Posterior vena cava (tissue), 2 donors: ENCODE measurements at regions of chr20 and their contacts with region 1.

Region 1: DNA sequence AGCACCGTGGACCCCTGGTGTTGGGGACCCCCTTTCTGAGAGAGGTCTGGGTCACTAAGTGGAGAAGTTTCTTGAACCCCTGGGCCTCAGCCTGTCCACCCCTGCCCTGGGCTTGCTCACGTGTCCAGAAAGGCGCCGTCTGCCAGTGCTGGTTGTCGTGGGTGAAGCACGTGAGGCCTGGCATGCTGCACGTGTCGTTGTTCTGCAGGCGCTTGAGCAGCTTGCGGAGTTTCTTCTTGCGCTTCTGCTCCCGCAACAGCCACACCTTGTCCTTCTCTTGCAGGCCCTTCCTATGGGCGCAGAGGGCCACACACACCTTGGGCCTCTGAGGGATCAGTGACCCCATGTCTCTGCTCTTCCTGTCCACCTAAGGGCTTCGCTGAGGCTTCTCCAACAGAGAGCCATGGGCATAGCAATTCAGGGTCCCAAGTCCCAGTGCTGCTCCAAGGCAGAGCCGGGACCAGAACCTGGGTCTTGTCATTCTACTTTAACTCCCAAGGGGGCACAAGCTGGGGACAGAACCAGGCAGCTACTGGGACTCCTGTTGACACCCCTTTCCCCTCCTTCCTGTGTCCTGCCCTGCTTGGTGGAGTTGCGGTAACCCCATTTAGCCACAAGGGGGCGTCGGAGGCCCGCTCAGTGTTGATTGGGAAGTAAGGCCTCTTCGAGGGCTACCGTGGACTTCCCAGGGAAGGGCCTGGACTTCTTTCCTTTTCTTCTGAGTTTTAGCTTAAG is 121.8 kb downstream of the SULF2 start:
- DNase-seq: peak; percentile 94

Region 2: GRCh38 chr20:47521059-47521808 is 142.3 kb before region 1 on chr20:
- intact Hi-C with region 1: no loop called
- DNase-seq: no peak

Region 3: GRCh38 chr20:47701612-47702011 is 38.1 kb after region 1 on chr20:
- intact Hi-C with region 1: no loop called
- DNase-seq: no peak

Region 4: DNA sequence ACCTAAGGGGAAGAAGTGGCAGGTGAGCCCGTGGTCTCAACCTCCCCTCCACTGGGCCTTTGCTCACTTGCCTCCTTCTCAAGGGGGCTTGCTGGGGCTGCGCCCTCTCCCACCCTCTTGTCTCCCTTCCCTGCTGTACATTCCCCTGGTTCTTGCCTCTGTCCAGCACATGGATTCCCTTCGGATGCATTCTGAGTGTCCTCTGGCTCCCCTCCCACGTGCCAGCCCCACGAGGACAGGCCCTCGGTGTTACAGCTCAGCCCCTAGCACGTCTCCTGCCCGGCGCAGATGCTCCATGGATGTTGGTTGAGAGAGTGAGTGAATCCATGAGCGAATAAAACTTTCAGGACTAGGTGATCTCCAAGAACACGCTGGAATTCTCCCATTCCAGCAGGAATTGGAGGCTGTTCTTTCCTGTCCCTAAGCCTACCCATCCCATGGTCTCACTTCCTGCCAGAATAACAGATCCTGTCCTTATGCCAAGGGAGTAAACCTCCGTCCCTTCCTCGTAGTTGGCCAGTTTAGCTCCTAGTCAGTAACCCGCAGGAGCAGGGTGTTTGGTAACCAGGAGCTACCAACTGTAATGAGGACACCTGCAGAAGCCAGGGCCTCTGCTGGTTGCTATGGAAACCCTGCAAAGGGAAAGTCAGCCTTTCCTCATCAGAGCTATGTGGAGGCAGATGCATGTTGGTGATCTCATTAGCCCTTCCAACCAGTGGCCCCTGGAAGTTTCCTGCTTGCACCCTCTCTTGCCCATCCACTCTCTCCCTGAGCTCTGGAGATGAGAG is 489.8 kb after region 1 on chr20:
- intact Hi-C with region 1: no loop called
- DNase-seq: peak; percentile 31

Region 5: DNA sequence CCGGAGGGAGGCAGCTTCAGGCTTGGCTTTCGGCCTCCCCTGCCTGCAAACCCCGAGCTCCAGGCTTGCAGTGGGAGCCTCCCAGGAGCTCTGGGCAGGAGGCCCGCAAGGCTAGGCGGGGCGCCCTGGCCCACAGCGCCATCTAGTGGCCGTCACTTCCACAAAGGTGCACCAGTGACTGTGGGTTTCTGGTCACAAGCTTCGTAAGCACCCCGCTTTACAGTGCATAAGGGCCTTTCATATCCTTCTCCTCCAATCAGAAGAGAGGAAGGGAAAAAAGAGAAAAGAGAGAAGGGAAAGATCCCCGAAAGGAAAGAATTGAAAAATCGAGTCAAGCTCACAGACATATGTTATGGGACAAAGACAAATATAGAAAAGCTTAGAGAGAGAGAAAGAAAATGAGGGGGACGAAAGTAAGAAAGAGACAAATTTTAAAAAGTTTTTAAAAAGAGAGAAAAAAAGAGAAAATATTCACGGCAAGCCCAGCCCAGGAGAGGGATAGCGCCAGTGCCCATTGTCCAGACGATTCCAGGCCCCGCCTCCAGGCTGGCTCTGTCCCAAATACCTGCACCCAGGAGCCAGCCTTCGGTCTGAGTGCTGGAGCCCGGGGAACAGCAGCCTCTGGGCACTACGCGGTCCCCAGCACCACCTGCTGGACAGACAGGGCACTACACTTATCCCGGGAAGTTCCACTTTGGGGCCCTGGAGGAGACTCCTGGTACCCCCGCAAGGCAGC is 957.2 kb after region 1 on chr20:
- intact Hi-C with region 1: loop called in 1 of 2 experiments (anchors 5 kb)
- DNase-seq: peak; percentile 95